Naive thymus-derived CD4-positive, alpha-beta T cell (primary cell): ENCODE measurements at regions of chr13 and their contacts with region 1.

Region 1: DNA sequence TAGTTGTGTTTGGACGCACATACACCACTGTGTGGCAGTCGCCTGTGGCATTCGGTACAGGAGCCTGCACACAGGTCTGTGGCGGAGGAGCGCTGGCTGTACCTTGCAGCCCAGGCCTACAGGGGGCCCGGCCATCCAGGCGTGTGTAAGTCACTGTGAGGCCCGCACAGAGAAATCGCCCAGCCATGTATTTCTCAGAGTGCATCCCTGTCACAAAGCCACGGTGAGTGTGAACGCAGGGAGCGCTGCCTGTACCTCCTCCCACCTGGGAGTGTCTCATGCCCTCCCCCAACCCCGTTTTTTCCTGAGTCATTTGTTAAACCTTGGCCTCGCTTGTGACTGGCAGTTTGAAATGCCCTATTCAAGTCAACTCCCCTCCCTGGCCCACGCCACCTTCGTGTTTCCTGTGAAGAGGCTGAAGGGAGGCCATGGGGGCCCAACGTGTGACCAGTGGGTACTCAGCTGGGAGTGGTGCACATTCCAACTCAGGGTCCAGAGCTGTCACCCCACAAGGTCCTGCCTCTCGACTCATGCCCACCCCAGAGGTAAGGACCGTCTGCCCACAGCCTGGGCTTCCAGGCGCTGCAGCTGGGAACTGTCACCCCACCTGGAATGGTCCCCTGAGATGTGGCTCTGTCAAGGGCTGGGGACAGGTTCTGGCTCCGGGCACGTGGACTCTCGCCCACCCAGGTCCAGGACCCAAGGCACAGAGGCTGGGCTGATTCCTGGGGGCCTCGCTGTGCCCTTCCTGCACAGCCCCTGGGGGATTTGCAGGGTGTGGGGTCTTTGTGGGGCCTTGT is 11.6 kb upstream of the RASA3 start:
- DNase-seq: peak in 3 of 9 donors; percentile 48 to 57 (median 56)
- ATAC-seq: no peak
- H3K4me3 ChIP-seq: peak overlapping the region; percentile 18
- H3K4me3 Mint-ChIP-seq: peak overlapping the region in 5 of 10 donors; percentile 48 to 67 (median 51)
- H3K27ac ChIP-seq: peak overlapping the region; percentile 74
- H3K27ac Mint-ChIP-seq: no peak overlapping the region
- H3K4me1 ChIP-seq: peaks cover 76 to 84% of the 10 kb centered on the region in 2 donors
- H3K4me1 Mint-ChIP-seq: peaks cover 31 to 48% (median 42%) of the 10 kb centered on the region in 7 donors
- H3K27me3 ChIP-seq: no peaks in the 10 kb centered on the region
- H3K27me3 Mint-ChIP-seq: peaks cover 0 to 12% (median 0%) of the 10 kb centered on the region in 5 donors

Region 2: GRCh38 chr13:114065141-114065925 is 78.7 kb before region 1 on chr13:
- CTCF ChIA-PET with region 1: no interaction called
- POLR2A ChIA-PET with region 1: interaction called, 5 read pairs
- intact Hi-C with region 1: loop called in 1 of 2 experiments (anchors 2 kb)
- DNase-seq: peak; percentile 42 to 74 (median 63)
- ATAC-seq: peak; percentile 77
- H3K4me3 ChIP-seq: peak overlapping the region; percentile 66
- H3K4me3 Mint-ChIP-seq: peak overlapping the region; percentile 78 to 89 (median 86)
- H3K27ac ChIP-seq: peak overlapping the region; percentile 76
- H3K27ac Mint-ChIP-seq: peak overlapping the region; percentile 86 to 99 (median 92)
- H3K4me1 ChIP-seq: peaks cover 51 to 60% of the 10 kb centered on the region in 2 donors
- H3K4me1 Mint-ChIP-seq: peaks cover 51 to 72% (median 62%) of the 10 kb centered on the region in 7 donors
- H3K27me3 ChIP-seq: no peaks in the 10 kb centered on the region
- H3K27me3 Mint-ChIP-seq: no peaks in the 10 kb centered on the region

Region 3: GRCh38 chr13:114132419-114133121 is 11.4 kb before region 1 on chr13 and contains the start of gene RASA3:
- CTCF ChIA-PET with region 1: interaction called, 13 read pairs
- POLR2A ChIA-PET with region 1: interaction called, 128 read pairs
- intact Hi-C with region 1: loop called (anchors 1 kb)
- DNase-seq: peak in 8 of 9 donors; percentile 52 to 75 (median 58)
- ATAC-seq: peak; percentile 69
- H3K4me3 ChIP-seq: peak within 1 kb of the TSS; percentile 90
- H3K4me3 Mint-ChIP-seq: peak within 1 kb of the TSS; percentile 96 to 100 (median 100)
- H3K27ac ChIP-seq: peak within 1 kb of the TSS; percentile 85
- H3K27ac Mint-ChIP-seq: peak within 1 kb of the TSS; percentile 82 to 100 (median 99)
- H3K4me1 ChIP-seq: peaks cover 32 to 49% of the 10 kb centered on the region in 2 donors
- H3K4me1 Mint-ChIP-seq: peaks cover 36 to 74% (median 56%) of the 10 kb centered on the region in 7 donors
- H3K27me3 ChIP-seq: no peaks in the 10 kb centered on the region
- H3K27me3 Mint-ChIP-seq: peaks cover 0 to 4% (median 0%) of the 10 kb centered on the region in 5 donors
- total RNA-seq, gene RASA3: 110 to 227 (median 199) TPM

Region 4: GRCh38 chr13:114161644-114162532 is 17.9 kb after region 1 on chr13:
- CTCF ChIA-PET with region 1: interaction called, 13 read pairs
- POLR2A ChIA-PET with region 1: interaction called, 100 read pairs
- intact Hi-C with region 1: loop called in 1 of 2 experiments (anchors 1 kb)
- DNase-seq: peak in 5 of 9 donors; percentile 41 to 61 (median 59)
- ATAC-seq: peak; percentile 81
- H3K4me3 ChIP-seq: peak overlapping the region; percentile 45
- H3K4me3 Mint-ChIP-seq: peak overlapping the region; percentile 76 to 92 (median 84)
- H3K27ac ChIP-seq: peak overlapping the region; percentile 73
- H3K27ac Mint-ChIP-seq: peak overlapping the region; percentile 66 to 99 (median 96)
- H3K4me1 ChIP-seq: peaks cover 43 to 65% of the 10 kb centered on the region in 2 donors
- H3K4me1 Mint-ChIP-seq: peaks cover 59 to 95% (median 92%) of the 10 kb centered on the region in 7 donors
- H3K27me3 ChIP-seq: no peaks in the 10 kb centered on the region
- H3K27me3 Mint-ChIP-seq: peaks cover 0 to 36% (median 0%) of the 10 kb centered on the region in 5 donors

Region 5: GRCh38 chr13:114177245-114178010 is 33.4 kb after region 1 on chr13:
- CTCF ChIA-PET with region 1: no interaction called
- POLR2A ChIA-PET with region 1: interaction called, 10 read pairs
- intact Hi-C with region 1: no loop called
- DNase-seq: no peak
- ATAC-seq: no peak
- H3K4me3 ChIP-seq: no peak overlapping the region
- H3K4me3 Mint-ChIP-seq: peak overlapping the region in 1 of 10 donors; percentile 25
- H3K27ac ChIP-seq: no peak overlapping the region
- H3K27ac Mint-ChIP-seq: peak overlapping the region in 7 of 9 donors; percentile 38 to 87 (median 62)
- H3K4me1 ChIP-seq: peaks cover 18 to 23% of the 10 kb centered on the region in 2 donors
- H3K4me1 Mint-ChIP-seq: peaks cover 15 to 69% (median 57%) of the 10 kb centered on the region in 7 donors
- H3K27me3 ChIP-seq: no peaks in the 10 kb centered on the region
- H3K27me3 Mint-ChIP-seq: peaks cover 0 to 22% (median 0%) of the 10 kb centered on the region in 5 donors

Region 6: GRCh38 chr13:114219392-114219791 is 75.4 kb after region 1 on chr13:
- CTCF ChIA-PET with region 1: interaction called, 7 read pairs
- POLR2A ChIA-PET with region 1: interaction called, 29 read pairs
- intact Hi-C with region 1: no loop called
- DNase-seq: peak in 4 of 9 donors; percentile 21 to 34 (median 24)
- ATAC-seq: no peak
- H3K4me3 ChIP-seq: peak overlapping the region; percentile 3
- H3K4me3 Mint-ChIP-seq: peak overlapping the region in 9 of 10 donors; percentile 54 to 88 (median 72)
- H3K27ac ChIP-seq: peak overlapping the region; percentile 47
- H3K27ac Mint-ChIP-seq: peak overlapping the region in 8 of 9 donors; percentile 74 to 92 (median 85)
- H3K4me1 ChIP-seq: peaks cover 4 to 43% of the 10 kb centered on the region in 2 donors
- H3K4me1 Mint-ChIP-seq: peaks cover 21 to 80% (median 66%) of the 10 kb centered on the region in 7 donors
- H3K27me3 ChIP-seq: no peaks in the 10 kb centered on the region
- H3K27me3 Mint-ChIP-seq: peaks cover 0 to 48% (median 0%) of the 10 kb centered on the region in 5 donors